ENCODE measurements at regions of chr17 and their contacts with region 1.

Region 1: DNA sequence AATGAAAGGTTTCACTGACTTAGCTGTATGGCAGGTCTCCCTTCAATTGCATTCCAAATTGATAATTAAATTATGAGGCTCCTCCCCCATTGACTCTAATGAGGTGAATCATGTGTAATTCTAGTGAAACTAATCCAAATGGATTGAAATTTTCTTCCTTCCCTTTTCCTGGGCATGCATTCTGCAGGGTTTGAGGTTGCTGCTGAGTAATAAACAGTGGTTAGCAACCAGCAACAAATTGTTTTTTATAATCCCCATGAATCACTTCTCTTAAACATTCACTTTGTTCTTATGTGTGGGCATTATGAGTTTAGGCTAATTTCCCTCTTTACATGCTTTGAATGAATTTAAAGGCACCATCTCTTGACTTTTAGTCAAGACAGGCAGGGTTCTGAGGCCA is 43.4 kb downstream of the MYOCD start:
- DNase-seq: no peak
- H3K4me3 ChIP-seq: no peak overlapping the region
- H3K27ac ChIP-seq: no peak overlapping the region
- H3K4me1 ChIP-seq: no peaks in the 10 kb centered on the region
- H3K27me3 ChIP-seq: no peaks in the 10 kb centered on the region
- CTCF ChIP-seq: no peak
- EP300 ChIP-seq: no peak
- POLR2A ChIP-seq: no peak

Region 2: DNA sequence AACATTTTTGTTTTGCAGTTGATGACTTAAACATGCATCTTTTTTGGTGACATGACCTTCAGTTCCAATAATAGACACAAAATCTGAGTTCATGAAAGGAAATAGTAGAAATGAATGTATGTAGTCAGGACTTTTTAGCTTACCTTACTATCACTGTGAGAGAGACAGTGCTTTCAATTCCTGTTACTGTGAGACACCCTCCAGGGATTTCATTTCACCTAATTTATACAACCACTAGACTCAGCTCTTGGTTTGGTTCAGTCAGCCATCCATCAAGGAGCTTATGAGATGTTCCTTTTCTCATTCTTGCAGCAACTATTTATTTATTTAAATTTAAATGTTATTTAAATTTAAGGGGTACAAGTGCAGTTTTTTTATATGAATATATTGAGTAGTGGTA is 610.5 kb before region 1 on chr17:
- in situ Hi-C with region 1: no loop called
- intact Hi-C with region 1: no loop called
- DNase-seq: no peak
- H3K4me3 ChIP-seq: no peak overlapping the region
- H3K27ac ChIP-seq: no peak overlapping the region
- H3K4me1 ChIP-seq: no peaks in the 10 kb centered on the region
- H3K27me3 ChIP-seq: no peaks in the 10 kb centered on the region
- CTCF ChIP-seq: no peak
- EP300 ChIP-seq: no peak
- POLR2A ChIP-seq: no peak

Region 3: DNA sequence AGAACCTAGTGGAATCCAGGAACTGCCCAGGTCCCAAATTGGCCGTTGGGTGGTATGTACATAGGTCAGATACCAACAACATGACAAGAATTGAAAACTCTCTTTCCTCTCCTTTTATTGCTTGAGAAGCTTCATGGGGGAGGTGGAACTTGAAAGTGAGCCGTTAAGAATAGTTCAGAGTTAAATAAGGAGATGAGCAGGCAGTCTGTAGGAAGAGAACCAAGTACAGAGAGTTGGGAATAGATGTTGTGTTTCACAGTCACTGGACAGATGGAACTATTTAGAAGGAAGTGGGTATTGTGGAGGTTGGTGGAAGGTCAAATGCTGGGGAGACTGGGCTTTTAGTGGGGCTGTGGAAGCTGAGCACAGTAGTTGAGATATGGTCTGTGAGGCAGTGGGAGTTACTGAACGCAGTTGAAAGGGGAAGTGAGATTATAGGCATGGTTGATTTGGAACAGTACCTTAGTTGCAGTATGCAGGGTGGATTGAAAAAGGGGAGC is 106.6 kb after region 1 on chr17:
- in situ Hi-C with region 1: loop called in 1 of 4 experiments (anchors 25 kb)
- intact Hi-C with region 1: no loop called
- DNase-seq: no peak
- H3K4me3 ChIP-seq: no peak overlapping the region
- H3K27ac ChIP-seq: peak overlapping the region; percentile 39 to 65 (median 48)
- H3K4me1 ChIP-seq: peaks cover 0 to 29% (median 16%) of the 10 kb centered on the region in 4 donors
- H3K27me3 ChIP-seq: no peaks in the 10 kb centered on the region
- CTCF ChIP-seq: no peak
- EP300 ChIP-seq: no peak
- POLR2A ChIP-seq: no peak